ENCODE measurements at regions of chr6 and their contacts with region 1.

Region 1: GRCh38 chr6:30717042-30717844 is at the start of gene MDC1:
- DNase-seq: peak; percentile 100
- ATAC-seq: peak; percentile 78
- H3K4me3 Mint-ChIP-seq: peak within 1 kb of the TSS; percentile 98
- H3K27ac Mint-ChIP-seq: peak within 1 kb of the TSS; percentile 99
- H3K4me1 Mint-ChIP-seq: peaks cover 43% of the 10 kb centered on the region
- H3K27me3 Mint-ChIP-seq: no peaks in the 10 kb centered on the region
- total RNA-seq, gene MDC1: 92.0 to 101 TPM

Region 2: DNA sequence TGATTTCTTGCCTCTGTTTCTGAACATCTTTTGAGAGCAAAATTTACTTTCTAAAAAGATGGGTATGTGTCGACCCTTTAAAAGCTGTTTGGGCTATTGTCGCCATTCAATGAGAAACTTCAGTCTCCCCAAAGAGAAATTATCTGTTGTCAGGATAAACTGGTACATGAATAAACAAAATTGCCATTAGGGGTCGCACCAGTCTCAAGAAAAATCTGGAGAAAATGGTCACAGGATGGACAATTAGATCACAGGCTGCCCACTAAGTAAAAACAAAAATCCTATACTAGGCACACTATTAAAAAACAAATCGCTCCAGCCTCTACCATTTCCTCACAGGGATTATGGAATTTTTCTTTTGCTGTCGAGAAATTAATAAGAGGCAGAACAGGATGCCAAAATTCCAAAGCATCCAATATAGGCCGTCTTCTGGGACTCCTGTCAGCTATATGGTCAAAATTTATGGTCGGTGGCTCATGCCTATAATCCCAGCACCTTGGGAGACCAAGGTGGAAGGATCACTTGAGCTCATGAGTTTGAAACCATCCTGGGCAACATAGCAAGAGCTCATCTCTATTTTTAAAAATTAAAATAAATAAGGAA is 233.5 kb before region 1 on chr6:
- CTCF ChIA-PET with region 1: no interaction called
- POLR2A ChIA-PET with region 1: no interaction called
- intact Hi-C with region 1: loop called in 1 of 2 experiments (anchors 2 kb)
- DNase-seq: no peak
- ATAC-seq: no peak
- H3K4me3 Mint-ChIP-seq: no peak overlapping the region
- H3K27ac Mint-ChIP-seq: no peak overlapping the region
- H3K4me1 Mint-ChIP-seq: peaks cover 39% of the 10 kb centered on the region
- H3K27me3 Mint-ChIP-seq: peaks cover 28% of the 10 kb centered on the region

Region 3: DNA sequence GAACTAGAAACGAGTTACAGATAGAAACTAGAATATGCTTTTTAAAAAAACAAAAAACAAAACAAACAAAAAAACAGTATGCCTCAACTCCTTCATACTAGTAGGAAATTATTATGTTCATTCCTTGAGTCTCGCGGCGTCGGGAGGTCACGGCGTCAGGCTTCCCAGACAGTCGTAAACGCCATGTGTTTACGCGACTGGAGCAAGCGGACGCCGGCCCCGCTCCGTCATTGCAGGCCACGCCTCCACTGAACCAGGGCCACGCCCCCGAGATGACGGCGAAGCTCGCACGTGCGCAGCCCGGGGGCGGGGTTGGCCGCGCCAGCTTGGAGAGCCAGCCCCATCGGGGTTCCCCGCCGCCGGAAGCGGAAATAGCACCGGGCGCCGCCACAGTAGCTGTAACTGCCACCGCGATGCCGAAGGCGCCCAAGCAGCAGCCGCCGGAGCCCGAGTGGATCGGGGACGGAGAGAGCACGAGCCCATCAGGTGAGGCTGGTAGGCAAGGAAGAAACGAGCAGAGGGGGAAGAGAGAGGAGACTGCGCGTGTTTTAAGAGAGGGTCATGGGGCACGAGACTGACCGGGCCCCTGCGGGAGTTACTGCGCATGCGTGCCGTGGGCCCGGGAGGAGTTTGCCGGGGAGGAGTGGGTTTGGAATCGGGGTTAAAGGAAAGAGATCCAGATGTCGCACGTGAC is 146.0 kb before region 1 on chr6 and contains the start of gene ABCF1:
- CTCF ChIA-PET with region 1: no interaction called
- POLR2A ChIA-PET with region 1: interaction called, 5 read pairs
- intact Hi-C with region 1: loop called in 1 of 2 experiments (anchors 1 kb)
- DNase-seq: peak; percentile 100
- ATAC-seq: peak; percentile 86
- H3K4me3 Mint-ChIP-seq: peak within 1 kb of the TSS; percentile 94
- H3K27ac Mint-ChIP-seq: peak within 1 kb of the TSS; percentile 100
- H3K4me1 Mint-ChIP-seq: peaks cover 62% of the 10 kb centered on the region
- H3K27me3 Mint-ChIP-seq: no peaks in the 10 kb centered on the region
- total RNA-seq, gene ABCF1: 100.0 to 105 TPM

Region 4: GRCh38 chr6:30678964-30679726 is 38.1 kb before region 1 on chr6:
- CTCF ChIA-PET with region 1: interaction called, 97 read pairs
- POLR2A ChIA-PET with region 1: interaction called, 20 read pairs
- intact Hi-C with region 1: loop called (anchors 1 kb)
- DNase-seq: peak; percentile 96
- ATAC-seq: peak; percentile 37
- H3K4me3 Mint-ChIP-seq: peak overlapping the region; percentile 100
- H3K27ac Mint-ChIP-seq: peak overlapping the region; percentile 97
- H3K4me1 Mint-ChIP-seq: peaks cover 23% of the 10 kb centered on the region
- H3K27me3 Mint-ChIP-seq: no peaks in the 10 kb centered on the region

Region 5: DNA sequence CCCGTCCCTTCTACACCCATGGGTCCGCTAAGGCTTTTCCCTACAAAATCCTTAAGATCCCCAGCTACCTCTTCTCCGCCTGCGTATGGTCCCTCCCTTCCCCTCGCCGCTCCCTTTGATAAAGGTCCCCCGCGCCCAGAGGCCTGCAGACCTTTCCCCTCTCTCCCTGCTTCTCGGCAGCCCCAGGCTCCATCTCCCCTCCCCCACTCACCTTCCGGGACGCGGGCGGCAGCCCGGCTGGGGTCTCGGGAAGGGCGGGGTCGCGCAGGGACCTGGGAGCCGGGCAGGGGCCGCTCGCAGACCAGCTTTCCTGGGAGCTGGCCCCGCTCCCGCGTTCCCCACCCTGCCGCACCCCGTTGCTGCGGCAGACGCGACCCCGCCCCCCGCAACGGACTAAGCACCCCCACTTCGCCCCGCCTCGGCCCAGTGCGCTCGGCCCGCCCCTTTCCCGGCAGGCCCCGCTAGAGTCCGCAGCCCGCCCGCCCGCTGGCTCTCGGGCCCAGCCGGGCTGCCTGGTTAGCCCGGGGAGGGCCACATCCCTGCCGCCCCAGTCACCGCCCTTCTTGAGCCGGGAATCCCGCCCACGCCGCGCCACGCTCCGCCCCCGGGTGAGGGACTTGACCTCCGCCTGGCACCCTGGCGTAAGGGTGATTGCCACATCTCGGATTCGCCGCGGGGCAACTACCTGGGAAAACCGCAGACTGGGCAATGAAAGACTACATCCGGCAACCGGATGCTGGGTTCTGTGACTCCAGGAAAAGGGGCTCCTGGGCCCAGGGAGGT is 25.3 kb after region 1 on chr6 and contains the start of gene FLOT1:
- CTCF ChIA-PET with region 1: no interaction called
- POLR2A ChIA-PET with region 1: interaction called, 4 read pairs
- intact Hi-C with region 1: loop called (anchors 1 to 2 kb)
- DNase-seq: peak; percentile 98
- ATAC-seq: peak; percentile 74
- H3K4me3 Mint-ChIP-seq: peak within 1 kb of the TSS; percentile 96
- H3K27ac Mint-ChIP-seq: peak within 1 kb of the TSS; percentile 95
- H3K4me1 Mint-ChIP-seq: peaks cover 67% of the 10 kb centered on the region
- H3K27me3 Mint-ChIP-seq: no peaks in the 10 kb centered on the region
- total RNA-seq, gene FLOT1: 155 to 188 TPM

Region 6: DNA sequence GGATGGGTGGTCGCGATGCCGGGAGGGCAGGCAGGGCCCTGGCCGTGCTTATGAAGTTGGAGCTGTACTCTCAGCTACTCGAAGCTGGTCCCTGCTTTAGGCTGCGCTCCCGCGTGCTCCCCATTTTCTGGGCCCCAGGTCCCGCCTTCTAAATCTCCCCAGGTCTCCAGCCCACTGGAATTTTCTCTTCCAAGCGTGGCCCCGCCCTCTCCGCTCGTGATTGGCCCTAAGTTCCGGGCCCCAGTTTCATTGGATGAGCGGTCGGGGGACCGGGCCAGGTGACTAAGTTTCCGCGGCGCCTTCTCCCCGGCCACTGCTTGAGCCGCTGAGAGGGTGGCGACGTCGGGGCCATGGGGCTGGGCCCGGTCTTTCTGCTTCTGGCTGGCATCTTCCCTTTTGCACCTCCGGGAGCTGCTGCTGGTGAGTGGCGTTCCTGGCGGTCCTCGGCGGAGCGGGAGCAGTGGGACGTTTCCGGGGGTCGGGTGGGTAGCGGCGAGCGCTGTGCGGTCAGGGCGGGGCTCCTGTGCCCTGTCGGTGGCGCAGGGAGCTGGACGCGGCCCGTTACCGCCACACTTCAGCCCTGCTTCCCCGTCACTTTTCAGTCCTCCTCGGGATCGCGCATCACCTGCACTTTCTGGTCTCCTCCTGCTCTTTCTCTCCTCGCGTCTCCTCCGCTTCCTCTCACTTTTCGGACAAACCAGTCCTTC is 686.2 kb after region 1 on chr6 and contains the start of gene MICA:
- CTCF ChIA-PET with region 1: no interaction called
- POLR2A ChIA-PET with region 1: no interaction called
- intact Hi-C with region 1: loop called in 1 of 2 experiments (anchors 5 kb)
- DNase-seq: peak; percentile 83
- ATAC-seq: peak; percentile 68
- H3K4me3 Mint-ChIP-seq: peak within 1 kb of the TSS; percentile 71
- H3K27ac Mint-ChIP-seq: peak within 1 kb of the TSS; percentile 71
- H3K4me1 Mint-ChIP-seq: peaks cover 62% of the 10 kb centered on the region
- H3K27me3 Mint-ChIP-seq: no peaks in the 10 kb centered on the region
- total RNA-seq, gene MICA: 6.3 to 7.1 TPM

Measured in activated CD4-positive, alpha-beta T cell treated with anti-CD3 and anti-CD28 coated beads for 36 hours (primary cell).